Activated CD4-positive, alpha-beta memory T cell treated with anti-CD3 and anti-CD28 coated beads for 36 hours (primary cell): ENCODE measurements at regions of chr1 and their contacts with region 1.

Region 1: GRCh38 chr1:92476071-92476631 is 10.6 kb downstream of the GFI1 start:
- DNase-seq: peak; percentile 85
- H3K4me3 Mint-ChIP-seq: peak overlapping the region; percentile 54
- H3K27ac Mint-ChIP-seq: peak overlapping the region; percentile 86
- H3K4me1 Mint-ChIP-seq: peaks cover 87% of the 10 kb centered on the region
- H3K27me3 Mint-ChIP-seq: no peaks in the 10 kb centered on the region

Region 2: DNA sequence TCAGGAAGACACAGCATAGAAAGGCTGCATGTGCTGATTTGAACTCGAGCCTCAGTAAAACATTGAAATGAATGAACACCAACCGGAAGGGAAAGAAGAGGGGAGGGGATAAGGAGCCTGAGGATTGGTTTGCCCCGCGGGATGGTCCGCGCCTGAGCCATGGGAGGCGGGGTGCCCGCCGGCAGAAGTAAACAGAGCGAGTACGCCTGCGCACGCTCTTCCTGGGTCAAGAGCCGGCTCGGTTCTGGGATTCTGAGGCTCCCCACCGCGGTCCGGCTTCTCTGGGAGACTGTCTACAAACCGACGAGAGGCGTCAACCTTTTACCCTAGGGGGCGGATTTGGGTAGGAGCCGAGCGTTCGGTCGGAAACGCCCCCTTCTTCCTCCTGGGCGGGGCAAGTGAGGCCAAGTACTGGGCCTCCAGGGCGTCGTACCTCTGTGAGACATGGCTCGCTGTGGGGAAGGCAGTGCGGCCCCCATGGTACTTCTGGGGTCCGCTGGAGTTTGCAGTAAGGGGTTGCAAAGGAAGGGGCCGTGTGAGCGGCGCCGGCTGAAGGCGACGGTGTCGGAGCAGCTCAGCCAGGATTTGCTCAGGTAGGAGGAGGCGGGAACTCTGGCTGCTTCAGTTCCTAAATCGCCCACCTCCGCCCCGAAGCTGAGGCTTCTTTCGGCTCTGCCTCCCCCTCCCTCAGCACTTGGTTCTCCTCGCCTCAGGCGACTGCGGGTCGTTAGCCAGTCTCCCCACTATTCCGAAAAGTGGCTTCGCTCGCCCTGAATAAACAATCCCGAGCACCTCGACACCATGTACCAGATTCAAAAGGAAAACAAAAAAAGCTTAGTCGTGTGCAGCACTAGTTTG is 395.8 kb before region 1 on chr1 and contains the start of gene BTBD8:
- CTCF ChIA-PET with region 1: no interaction called
- POLR2A ChIA-PET with region 1: no interaction called
- intact Hi-C with region 1: loop called (anchors 10 kb)
- DNase-seq: peak; percentile 90
- H3K4me3 Mint-ChIP-seq: peak within 1 kb of the TSS; percentile 96
- H3K27ac Mint-ChIP-seq: peak within 1 kb of the TSS; percentile 74
- H3K4me1 Mint-ChIP-seq: peaks cover 5% of the 10 kb centered on the region
- H3K27me3 Mint-ChIP-seq: no peaks in the 10 kb centered on the region
- total RNA-seq, gene BTBD8: 2.9 TPM

Region 3: GRCh38 chr1:92317836-92318493 is 158.2 kb before region 1 on chr1:
- CTCF ChIA-PET with region 1: interaction called, 5 read pairs
- POLR2A ChIA-PET with region 1: interaction called, 5 read pairs
- intact Hi-C with region 1: loop called (anchors 1 kb)
- DNase-seq: no peak
- H3K4me3 Mint-ChIP-seq: peak overlapping the region; percentile 3
- H3K27ac Mint-ChIP-seq: peak overlapping the region; percentile 63
- H3K4me1 Mint-ChIP-seq: peaks cover 59% of the 10 kb centered on the region
- H3K27me3 Mint-ChIP-seq: no peaks in the 10 kb centered on the region

Region 4: GRCh38 chr1:92439291-92439690 is 36.9 kb before region 1 on chr1:
- CTCF ChIA-PET with region 1: no interaction called
- POLR2A ChIA-PET with region 1: no interaction called
- intact Hi-C with region 1: loop called (anchors 1 kb)
- DNase-seq: peak; percentile 34
- H3K4me3 Mint-ChIP-seq: no peak overlapping the region
- H3K27ac Mint-ChIP-seq: no peak overlapping the region
- H3K4me1 Mint-ChIP-seq: peaks cover 8% of the 10 kb centered on the region
- H3K27me3 Mint-ChIP-seq: no peaks in the 10 kb centered on the region

Region 5: GRCh38 chr1:92583821-92584760 is 107.9 kb after region 1 on chr1:
- CTCF ChIA-PET with region 1: interaction called, 5 read pairs
- POLR2A ChIA-PET with region 1: interaction called, 8 read pairs
- intact Hi-C with region 1: loop called (anchors 1 kb)
- DNase-seq: no peak
- H3K4me3 Mint-ChIP-seq: peak overlapping the region; percentile 65
- H3K27ac Mint-ChIP-seq: peak overlapping the region; percentile 92
- H3K4me1 Mint-ChIP-seq: peaks cover 64% of the 10 kb centered on the region
- H3K27me3 Mint-ChIP-seq: no peaks in the 10 kb centered on the region